Activated T-helper 1 cell treated with anti-CD3 and anti-CD28 coated beads, Interleukin-12 subunit alpha, Interleukin-12 subunit beta, Interleukin-2, Interleukin-4 antibody, amounts not matched to agents 30 ng/mL and 10 ng/mL and 1 ng/mL, durations not matched to agents 14 hours and 24 hours and 36 hours (primary cell): ENCODE measurements at regions of chr14 and their contacts with region 1.

Region 1: GRCh38 chr14:100383727-100384158 is 60.6 kb downstream of the SLC25A47 start:
- DNase-seq: peak; percentile 53
- H3K4me3 Mint-ChIP-seq: no peak overlapping the region
- H3K27ac Mint-ChIP-seq: no peak overlapping the region
- H3K4me1 Mint-ChIP-seq: peaks cover 23% of the 10 kb centered on the region
- H3K27me3 Mint-ChIP-seq: no peaks in the 10 kb centered on the region

Region 2: DNA sequence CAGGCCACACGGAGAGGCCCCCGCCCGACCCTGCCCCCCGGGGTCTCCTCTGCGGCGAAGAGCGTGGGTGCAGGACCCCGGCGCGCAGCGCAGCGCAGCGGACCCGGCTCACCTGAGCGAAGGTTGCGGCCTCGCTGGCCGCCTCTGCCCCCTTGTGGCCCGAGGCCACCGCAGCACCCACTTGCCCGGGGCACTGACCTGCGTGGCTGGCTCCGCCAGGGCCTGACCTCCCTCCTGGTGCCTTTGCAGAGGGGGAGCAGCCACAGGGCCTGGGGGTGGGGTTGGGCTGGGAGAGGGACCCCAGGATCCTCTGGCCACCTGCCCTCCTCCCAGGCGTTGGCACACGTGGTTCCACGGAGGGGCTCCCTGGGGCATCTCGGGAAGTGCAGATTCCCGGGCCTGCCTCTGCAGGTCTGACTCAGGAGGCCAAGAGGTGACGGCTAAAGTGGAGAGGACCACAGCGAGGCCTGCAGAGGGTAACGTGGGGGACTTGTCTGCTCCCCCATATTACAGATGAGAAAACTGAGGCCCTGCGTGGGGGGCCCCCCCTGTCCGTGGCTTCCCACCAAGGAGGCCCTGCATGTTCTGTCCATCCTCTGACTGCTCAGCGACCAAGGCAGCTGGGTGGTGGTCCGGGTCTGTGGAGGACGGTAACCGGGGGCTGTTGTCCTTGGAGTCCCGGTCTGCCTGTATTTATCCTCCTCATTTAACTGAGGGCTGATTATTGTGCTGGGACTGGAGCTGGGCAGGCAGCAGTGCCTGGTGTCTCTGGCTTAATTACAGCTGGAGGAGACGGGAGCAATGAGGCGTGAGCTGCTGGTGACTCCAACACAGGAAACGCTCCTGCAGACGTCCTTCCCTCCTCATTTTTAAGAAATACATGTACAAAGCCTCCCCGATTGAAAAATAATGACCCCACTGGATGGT is 271.3 kb after region 1 on chr14:
- intact Hi-C with region 1: loop called (anchors 1 kb)
- DNase-seq: peak; percentile 24
- H3K4me3 Mint-ChIP-seq: no peak overlapping the region
- H3K27ac Mint-ChIP-seq: no peak overlapping the region
- H3K4me1 Mint-ChIP-seq: no peaks in the 10 kb centered on the region
- H3K27me3 Mint-ChIP-seq: peaks cover 10% of the 10 kb centered on the region

Region 3: DNA sequence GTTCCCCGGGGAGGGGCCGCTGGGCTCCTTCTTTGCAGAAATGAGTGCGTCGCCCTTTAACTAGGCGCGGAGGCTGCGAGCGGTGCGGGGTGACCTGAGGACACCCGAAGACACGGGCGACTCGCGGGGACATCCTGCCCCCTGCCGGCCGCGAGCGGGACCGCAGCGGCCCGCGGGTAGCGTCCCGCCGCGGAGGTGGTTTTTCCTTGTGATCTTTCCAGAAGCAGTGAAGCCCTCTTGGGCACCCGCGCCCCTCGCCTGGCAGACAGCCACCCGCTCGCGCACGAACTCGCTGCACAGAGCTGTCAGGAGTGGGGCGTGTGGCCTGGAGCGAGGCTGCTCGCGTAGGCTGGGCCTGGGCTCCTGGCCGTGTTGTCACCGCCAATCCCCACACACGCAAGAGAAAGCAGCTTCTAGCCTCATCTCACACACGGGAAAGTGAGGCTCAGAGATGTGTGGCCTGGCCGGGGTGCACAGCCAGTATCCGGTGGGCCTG is 1244.8 kb after region 1 on chr14:
- intact Hi-C with region 1: loop called (anchors 5 kb)
- DNase-seq: peak; percentile 64
- H3K4me3 Mint-ChIP-seq: no peak overlapping the region
- H3K27ac Mint-ChIP-seq: no peak overlapping the region
- H3K4me1 Mint-ChIP-seq: no peaks in the 10 kb centered on the region
- H3K27me3 Mint-ChIP-seq: peaks cover 6% of the 10 kb centered on the region